Caco-2 (cell line): ENCODE measurements at regions of chr14 and their contacts with region 1.

Region 1: DNA sequence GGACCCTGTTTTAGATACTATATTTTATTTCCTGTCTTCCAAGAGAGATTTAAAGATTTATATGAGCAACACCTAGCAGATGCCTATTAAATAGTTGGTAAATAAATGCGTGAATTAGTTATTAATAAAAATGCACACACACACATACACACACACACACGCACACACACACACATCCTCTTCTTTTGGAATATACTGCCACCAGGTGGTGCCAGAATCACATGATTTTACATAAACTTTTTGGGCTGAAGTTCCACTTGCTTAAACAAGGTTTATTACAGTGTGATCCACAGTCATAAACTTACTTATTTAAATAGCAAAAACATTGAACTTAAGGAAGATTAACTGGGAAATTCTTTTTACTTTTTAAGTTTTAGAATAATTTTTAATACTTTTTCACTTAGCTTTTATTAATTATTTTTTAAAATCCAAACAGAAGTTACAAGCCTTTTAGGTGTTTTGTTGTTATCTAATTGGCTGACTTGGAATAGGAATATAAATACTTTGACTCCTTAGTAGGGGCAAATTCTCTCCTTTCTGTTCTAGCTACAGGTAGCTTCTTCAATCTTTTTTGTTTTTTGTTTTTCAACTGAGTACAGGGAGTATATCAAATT is 17.5 kb downstream of the RAD51B start:
- DNase-seq: peak in 1 of 2 experiments; percentile 73
- H3K4me3 ChIP-seq: no peak overlapping the region
- H3K4me3 Mint-ChIP-seq: no peak overlapping the region
- H3K27ac Mint-ChIP-seq: no peak overlapping the region
- H3K4me1 ChIP-seq: no peaks in the 10 kb centered on the region
- H3K4me1 Mint-ChIP-seq: no peaks in the 10 kb centered on the region
- H3K27me3 ChIP-seq: no peaks in the 10 kb centered on the region
- H3K27me3 Mint-ChIP-seq: no peaks in the 10 kb centered on the region
- CTCF ChIP-seq: peak; percentile 56 to 57

Region 2: GRCh38 chr14:67757175-67757574 is 79.9 kb before region 1 on chr14:
- CTCF ChIA-PET with region 1: no interaction called
- POLR2A ChIA-PET with region 1: no interaction called
- intact Hi-C with region 1: no loop called
- DNase-seq: no peak
- H3K4me3 ChIP-seq: no peak overlapping the region
- H3K4me3 Mint-ChIP-seq: no peak overlapping the region
- H3K27ac Mint-ChIP-seq: no peak overlapping the region
- H3K4me1 ChIP-seq: no peaks in the 10 kb centered on the region
- H3K4me1 Mint-ChIP-seq: peaks cover 8% of the 10 kb centered on the region
- H3K27me3 ChIP-seq: no peaks in the 10 kb centered on the region
- H3K27me3 Mint-ChIP-seq: no peaks in the 10 kb centered on the region
- CTCF ChIP-seq: no peak

Region 3: GRCh38 chr14:67934008-67934481 is 96.9 kb after region 1 on chr14:
- CTCF ChIA-PET with region 1: interaction called, 3 read pairs
- POLR2A ChIA-PET with region 1: no interaction called
- intact Hi-C with region 1: loop called (anchors 1 kb)
- DNase-seq: peak in 1 of 2 experiments; percentile 64
- H3K4me3 ChIP-seq: no peak overlapping the region
- H3K4me3 Mint-ChIP-seq: no peak overlapping the region
- H3K27ac Mint-ChIP-seq: peak overlapping the region; percentile 9
- H3K4me1 ChIP-seq: peaks cover 7% of the 10 kb centered on the region; the same call in 1 of the 2 replicates
- H3K4me1 Mint-ChIP-seq: peaks cover 7% of the 10 kb centered on the region
- H3K27me3 ChIP-seq: no peaks in the 10 kb centered on the region
- H3K27me3 Mint-ChIP-seq: no peaks in the 10 kb centered on the region
- CTCF ChIP-seq: peak; percentile 65 to 72

Region 4: DNA sequence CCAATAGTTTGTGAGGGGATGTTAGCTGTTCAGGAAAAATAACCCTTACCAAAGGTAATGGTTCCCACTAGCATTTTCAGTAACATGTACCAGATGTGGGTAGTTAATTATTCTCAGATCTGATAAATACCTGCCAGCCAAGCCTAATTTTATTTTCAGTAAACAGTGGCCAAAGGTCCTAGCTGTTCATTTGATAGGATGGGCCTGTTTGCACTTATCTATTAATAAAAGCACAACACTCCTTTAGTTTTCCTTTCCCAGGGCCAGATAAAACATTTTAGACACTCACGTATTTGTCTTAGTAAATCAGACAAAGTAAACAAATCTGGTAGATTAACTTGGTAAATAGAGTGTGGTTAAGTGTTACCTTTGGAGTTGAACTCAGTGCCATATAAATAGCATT is 327.6 kb after region 1 on chr14:
- CTCF ChIA-PET with region 1: no interaction called
- POLR2A ChIA-PET with region 1: no interaction called
- intact Hi-C with region 1: no loop called
- DNase-seq: peak in 1 of 2 experiments; percentile 16
- H3K4me3 ChIP-seq: no peak overlapping the region
- H3K4me3 Mint-ChIP-seq: peak overlapping the region; percentile 36
- H3K27ac Mint-ChIP-seq: peak overlapping the region; percentile 22
- H3K4me1 ChIP-seq: peaks cover 44% of the 10 kb centered on the region
- H3K4me1 Mint-ChIP-seq: peaks cover 40% of the 10 kb centered on the region
- H3K27me3 ChIP-seq: no peaks in the 10 kb centered on the region
- H3K27me3 Mint-ChIP-seq: no peaks in the 10 kb centered on the region
- CTCF ChIP-seq: no peak